GM12878 (cell line): ENCODE measurements at regions of chr14 and their contacts with region 1.

Region 1: GRCh38 chr14:70640938-70641547 is 673 bp upstream of the TTC9 start:
- DNase-seq: peak; percentile 60
- ATAC-seq: peak; percentile 77
- H3K4me3 ChIP-seq: peak overlapping the region; percentile 90
- H3K27ac ChIP-seq: peak overlapping the region; percentile 88
- H3K4me1 ChIP-seq: no peaks in the 10 kb centered on the region
- H3K27me3 ChIP-seq: no peaks in the 10 kb centered on the region
- CTCF ChIP-seq: peak in 2 of 3 experiments; percentile 10 to 14; a peak in 2 of 6 replicates
- EP300 ChIP-seq: 0 out of 4 replicates have a peak, but pooled peaks of 1 of the 2 experiments have one; percentile 32
- POLR2A ChIP-seq: peak; percentile 76
- RAD21 ChIP-seq: no peak

Region 2: DNA sequence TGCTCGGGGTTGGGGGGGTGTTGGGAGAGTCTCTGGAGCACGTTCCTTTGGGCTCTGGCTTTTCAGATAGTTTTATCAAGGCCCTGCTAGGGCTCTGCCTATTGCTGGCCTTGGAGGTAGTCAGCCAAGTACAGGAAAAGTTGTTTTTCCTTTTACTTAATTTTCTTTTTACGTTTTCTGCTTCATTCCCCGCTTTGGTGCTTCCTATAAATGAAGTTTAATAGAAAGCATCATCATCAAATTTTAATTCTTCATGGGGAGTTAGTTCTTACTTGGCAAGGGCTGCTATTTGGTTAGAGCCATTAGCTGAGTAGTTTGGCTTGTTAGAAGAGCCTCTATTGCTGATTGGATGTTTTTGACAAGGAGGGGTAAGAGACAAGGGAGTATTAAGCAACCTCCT is 204.2 kb before region 1 on chr14:
- CTCF ChIA-PET with region 1: no interaction called
- POLR2A ChIA-PET with region 1: no interaction called
- RAD21 ChIA-PET with region 1: no interaction called
- SMC1A ChIA-PET with region 1: no interaction called
- in situ Hi-C with region 1: no loop called
- intact Hi-C with region 1: no loop called
- DNase-seq: no peak
- ATAC-seq: no peak
- H3K4me3 ChIP-seq: no peak overlapping the region
- H3K27ac ChIP-seq: no peak overlapping the region
- H3K4me1 ChIP-seq: no peaks in the 10 kb centered on the region
- H3K27me3 ChIP-seq: no peaks in the 10 kb centered on the region
- CTCF ChIP-seq: no peak
- EP300 ChIP-seq: no peak
- POLR2A ChIP-seq: no peak
- RAD21 ChIP-seq: no peak

Region 3: GRCh38 chr14:70655110-70655826 is 14.2 kb after region 1 on chr14:
- CTCF ChIA-PET with region 1: interaction called, 61 read pairs
- POLR2A ChIA-PET with region 1: interaction called, 145 read pairs
- RAD21 ChIA-PET with region 1: interaction called, 71 read pairs
- SMC1A ChIA-PET with region 1: interaction called, 254 read pairs
- in situ Hi-C with region 1: no loop called
- intact Hi-C with region 1: no loop called
- DNase-seq: peak; percentile 88
- ATAC-seq: peak; percentile 87
- H3K4me3 ChIP-seq: peak overlapping the region; percentile 61
- H3K27ac ChIP-seq: peak overlapping the region; percentile 99
- H3K4me1 ChIP-seq: peaks cover 73% of the 10 kb centered on the region
- H3K27me3 ChIP-seq: no peaks in the 10 kb centered on the region
- CTCF ChIP-seq: no peak
- EP300 ChIP-seq: peak in 1 of 2 experiments; percentile 21; a peak in 1 of 4 replicates
- POLR2A ChIP-seq: 0 out of 2 replicates have a peak, but pooled peaks have one; percentile 35
- RAD21 ChIP-seq: no peak

Region 4: GRCh38 chr14:70707138-70708038 is 66.3 kb after region 1 on chr14:
- CTCF ChIA-PET with region 1: interaction called, 33 read pairs
- POLR2A ChIA-PET with region 1: interaction called, 6 read pairs
- RAD21 ChIA-PET with region 1: interaction called, 21 read pairs
- SMC1A ChIA-PET with region 1: interaction called, 120 read pairs
- in situ Hi-C with region 1: no loop called
- intact Hi-C with region 1: no loop called
- DNase-seq: peak; percentile 93
- ATAC-seq: peak; percentile 97
- H3K4me3 ChIP-seq: no peak overlapping the region
- H3K27ac ChIP-seq: peak overlapping the region; percentile 76
- H3K4me1 ChIP-seq: peaks cover 20% of the 10 kb centered on the region
- H3K27me3 ChIP-seq: no peaks in the 10 kb centered on the region
- CTCF ChIP-seq: no peak
- EP300 ChIP-seq: peak; percentile 37 to 50; a peak in 1 of 4 replicates
- POLR2A ChIP-seq: no peak
- RAD21 ChIP-seq: 0 out of 2 replicates have a peak, but pooled peaks have one; percentile 2